Psoas muscle (tissue), 8 donors: ENCODE measurements at regions of chr2 and their contacts with region 1.

Region 1: DNA sequence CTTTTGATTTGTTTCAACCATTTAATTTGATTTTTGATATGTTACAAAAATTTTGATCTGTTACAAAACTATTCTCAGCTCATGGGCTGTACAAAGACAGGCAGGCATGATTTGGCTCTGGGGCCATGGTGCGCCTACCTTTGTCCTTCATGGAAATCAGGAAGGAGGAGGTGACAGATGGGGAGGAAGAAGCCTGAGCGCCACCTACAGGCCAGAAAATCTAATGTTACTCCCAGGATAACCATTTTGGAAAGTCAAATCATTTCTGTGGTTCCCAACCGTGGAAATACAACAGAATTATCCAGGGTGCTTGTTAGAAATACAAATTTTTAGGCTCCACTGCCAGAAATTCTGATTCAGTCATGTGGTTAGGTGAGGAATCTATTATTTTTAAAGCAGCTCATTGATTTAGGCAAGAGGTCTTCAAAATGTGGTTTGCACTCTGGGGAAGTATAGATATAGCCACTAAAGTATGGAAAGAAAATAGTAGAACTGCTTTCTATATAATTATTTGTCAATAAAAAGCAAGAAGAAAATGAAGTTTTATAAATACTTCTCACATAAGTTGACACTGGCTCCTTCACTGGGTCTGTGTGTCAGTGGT is 93.9 kb downstream of the EVA1A start:
- DNase-seq: no peak
- ATAC-seq: no peak
- H3K4me3 ChIP-seq: no peak overlapping the region
- H3K27ac ChIP-seq: no peak overlapping the region
- H3K4me1 ChIP-seq: no peaks in the 10 kb centered on the region
- H3K27me3 ChIP-seq: no peaks in the 10 kb centered on the region
- CTCF ChIP-seq: peak; percentile 3

Region 2: GRCh38 chr2:75614056-75614710 is 147.4 kb after region 1 on chr2:
- intact Hi-C with region 1: loop called (anchors 5 to 10 kb)
- DNase-seq: no peak
- ATAC-seq: no peak
- H3K4me3 ChIP-seq: no peak overlapping the region
- H3K27ac ChIP-seq: no peak overlapping the region
- H3K4me1 ChIP-seq: no peaks in the 10 kb centered on the region
- H3K27me3 ChIP-seq: peaks cover 0 to 10% (median 0%) of the 10 kb centered on the region in 3 donors
- CTCF ChIP-seq: no peak